ENCODE measurements at regions of chr3 and their contacts with region 1.

Region 1: GRCh38 chr3:69161587-69162307 is 39.4 kb upstream of the LMOD3 start:
- DNase-seq: peak in 1 of 5 donors; percentile 23
- ATAC-seq: peak in 3 of 4 donors; percentile 52 to 66 (median 55)
- H3K4me3 ChIP-seq: no peak overlapping the region
- H3K27ac ChIP-seq: no peak overlapping the region
- H3K4me1 ChIP-seq: peaks cover 0 to 4% (median 0%) of the 10 kb centered on the region in 12 donors
- H3K27me3 ChIP-seq: no peaks in the 10 kb centered on the region
- CTCF ChIP-seq: peak; percentile 90 to 99 (median 94)
- POLR2A ChIP-seq: no peak

Region 2: GRCh38 chr3:69120879-69121464 is 40.8 kb before region 1 on chr3:
- intact Hi-C with region 1: loop called in 1 of 10 experiments (anchors 1 kb)
- DNase-seq: peak in 4 of 5 donors; percentile 41 to 66 (median 55)
- ATAC-seq: peak in 3 of 4 donors; percentile 33 to 51 (median 50)
- H3K4me3 ChIP-seq: peak overlapping the region; percentile 21 to 63 (median 50)
- H3K27ac ChIP-seq: peak overlapping the region in 11 of 12 donors; percentile 61 to 91 (median 83)
- H3K4me1 ChIP-seq: peaks cover 0 to 19% (median 4%) of the 10 kb centered on the region in 12 donors
- H3K27me3 ChIP-seq: no peaks in the 10 kb centered on the region
- CTCF ChIP-seq: peak; percentile 87 to 96 (median 94)
- POLR2A ChIP-seq: no peak

Region 3: DNA sequence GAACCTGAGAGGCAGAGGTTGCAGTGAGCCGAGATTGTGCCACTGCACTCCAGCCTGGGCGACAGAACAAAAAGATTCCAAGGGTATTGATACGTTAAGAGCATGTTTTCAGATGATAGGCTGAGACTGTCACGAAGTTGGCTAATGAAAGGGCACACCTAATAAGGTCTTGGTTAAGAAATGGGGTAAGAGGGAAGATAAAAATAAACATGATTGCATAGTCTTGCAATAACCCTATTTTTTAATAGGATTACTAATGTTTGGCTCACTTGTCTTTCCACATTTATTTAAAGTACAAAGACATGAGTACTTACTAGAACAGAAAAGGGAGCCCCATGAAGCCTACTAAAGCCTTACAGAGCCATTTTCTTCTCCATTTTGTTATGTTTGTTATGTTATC is 115.1 kb after region 1 on chr3:
- intact Hi-C with region 1: loop called in 1 of 10 experiments (anchors 2 kb)
- DNase-seq: no peak
- ATAC-seq: no peak
- H3K4me3 ChIP-seq: no peak overlapping the region
- H3K27ac ChIP-seq: no peak overlapping the region
- H3K4me1 ChIP-seq: peaks cover 0 to 5% (median 0%) of the 10 kb centered on the region in 12 donors
- H3K27me3 ChIP-seq: no peaks in the 10 kb centered on the region
- CTCF ChIP-seq: no peak
- POLR2A ChIP-seq: no peak

Region 4: DNA sequence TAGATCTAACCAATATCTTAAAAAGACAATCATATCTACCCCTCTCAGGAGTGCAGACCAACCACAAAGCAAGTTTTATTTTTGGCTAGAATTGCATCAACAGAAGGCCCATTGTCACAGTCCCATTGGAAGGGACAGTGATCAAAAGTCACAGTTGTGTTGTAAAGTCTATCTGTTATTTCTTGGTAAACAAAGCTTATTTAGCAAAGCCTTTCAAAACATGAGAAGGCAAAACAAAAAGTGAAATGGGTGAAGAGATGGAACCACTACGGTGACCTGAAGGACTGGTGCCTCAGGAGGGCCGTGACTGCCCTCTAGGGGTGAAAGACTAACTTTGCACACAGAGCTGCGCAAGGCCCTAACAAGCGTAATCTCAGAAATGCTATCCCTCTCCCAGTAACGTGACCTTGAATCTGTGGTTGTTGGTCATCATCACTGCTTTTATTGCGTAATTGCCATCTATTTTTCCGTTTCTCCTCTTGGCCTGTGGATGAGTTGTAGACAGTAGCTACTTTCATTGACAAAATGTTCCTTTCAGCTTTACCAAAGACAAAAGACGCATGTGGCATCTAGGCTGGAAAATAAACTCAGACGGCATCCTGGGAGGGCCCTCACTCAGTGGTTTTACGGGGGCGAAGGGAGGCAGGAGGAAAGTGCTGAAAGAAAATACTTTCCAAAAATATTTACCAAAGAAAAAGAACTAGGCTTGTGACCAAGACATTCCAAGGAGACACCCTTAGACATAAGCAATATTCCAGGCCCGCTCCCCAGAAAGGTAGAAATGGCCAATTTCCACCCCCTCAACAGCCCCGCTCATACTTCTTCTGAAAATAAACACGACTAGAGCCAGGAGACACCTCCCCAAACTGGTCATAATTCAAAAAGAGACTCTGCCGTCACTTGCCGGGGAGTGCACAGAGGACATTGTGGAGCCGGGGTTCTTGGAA is 144.8 kb after region 1 on chr3:
- intact Hi-C with region 1: loop called (anchors 1 to 5 kb)
- DNase-seq: peak; percentile 66 to 82 (median 78)
- ATAC-seq: peak; percentile 80 to 98 (median 94)
- H3K4me3 ChIP-seq: no peak overlapping the region
- H3K27ac ChIP-seq: peak overlapping the region in 10 of 12 donors; percentile 26 to 83 (median 70)
- H3K4me1 ChIP-seq: peaks cover 0 to 21% (median 7%) of the 10 kb centered on the region in 12 donors
- H3K27me3 ChIP-seq: no peaks in the 10 kb centered on the region
- CTCF ChIP-seq: peak; percentile 88 to 99 (median 94)
- POLR2A ChIP-seq: no peak

Region 5: DNA sequence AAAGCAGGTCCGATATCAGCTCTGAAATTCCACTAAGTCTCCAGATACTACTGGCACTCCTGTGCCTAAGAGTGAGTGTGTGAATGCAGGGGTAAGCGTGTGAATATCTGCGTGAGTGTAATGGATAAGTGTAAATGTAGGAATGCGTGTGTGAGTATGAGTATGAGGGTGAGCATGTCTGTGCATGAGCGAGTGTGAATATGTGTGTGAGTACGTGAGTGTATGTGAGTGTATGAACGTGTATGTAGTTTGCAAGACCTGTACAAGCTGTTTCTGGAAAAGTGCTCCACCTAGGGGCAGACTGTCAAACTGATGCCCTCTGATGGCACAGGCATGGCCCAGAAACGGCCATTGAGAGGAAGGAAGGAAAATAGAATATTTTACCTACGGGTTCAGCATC is 248.5 kb after region 1 on chr3:
- intact Hi-C with region 1: loop called in 4 of 10 experiments (anchors 5 kb)
- DNase-seq: peak; percentile 67 to 77 (median 75)
- ATAC-seq: peak; percentile 83 to 90 (median 88)
- H3K4me3 ChIP-seq: peak overlapping the region in 7 of 12 donors; percentile 17 to 42 (median 24)
- H3K27ac ChIP-seq: peak overlapping the region in 8 of 12 donors; percentile 12 to 90 (median 34)
- H3K4me1 ChIP-seq: peaks cover 0 to 38% (median 19%) of the 10 kb centered on the region in 12 donors
- H3K27me3 ChIP-seq: no peaks in the 10 kb centered on the region
- CTCF ChIP-seq: peak; percentile 72 to 90 (median 84)
- POLR2A ChIP-seq: no peak

Region 6: GRCh38 chr3:69419276-69419675 is 257.5 kb after region 1 on chr3:
- intact Hi-C with region 1: loop called in 7 of 10 experiments (anchors 2 to 5 kb)
- DNase-seq: no peak
- ATAC-seq: no peak
- H3K4me3 ChIP-seq: no peak overlapping the region
- H3K27ac ChIP-seq: no peak overlapping the region
- H3K4me1 ChIP-seq: peaks cover 0 to 15% (median 10%) of the 10 kb centered on the region in 12 donors
- H3K27me3 ChIP-seq: no peaks in the 10 kb centered on the region
- CTCF ChIP-seq: no peak
- POLR2A ChIP-seq: no peak

Region 7: DNA sequence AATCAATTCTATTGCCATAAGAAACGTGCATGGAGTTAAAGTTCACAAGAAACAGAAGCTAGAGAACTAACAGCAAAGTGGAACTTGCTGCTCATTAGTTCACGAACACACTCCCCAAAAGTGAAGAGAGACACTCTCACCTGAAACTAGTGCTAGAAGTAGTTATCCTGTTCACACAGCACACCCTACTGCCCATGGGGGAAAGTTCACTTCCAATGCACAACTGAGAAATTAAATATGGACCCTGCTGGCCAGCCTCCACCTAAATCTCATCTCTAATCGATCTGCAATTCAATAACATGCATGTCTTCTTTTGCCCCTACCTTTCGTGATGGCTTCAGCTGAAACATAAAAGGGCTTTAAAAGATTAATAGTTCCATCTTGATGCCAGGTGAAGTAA is 263.5 kb after region 1 on chr3:
- intact Hi-C with region 1: loop called in 9 of 10 experiments (anchors 2 to 5 kb)
- DNase-seq: peak in 1 of 5 donors; percentile 30
- ATAC-seq: peak in 3 of 4 donors; percentile 56 to 70 (median 59)
- H3K4me3 ChIP-seq: no peak overlapping the region
- H3K27ac ChIP-seq: no peak overlapping the region
- H3K4me1 ChIP-seq: peaks cover 0 to 14% (median 10%) of the 10 kb centered on the region in 12 donors
- H3K27me3 ChIP-seq: no peaks in the 10 kb centered on the region
- CTCF ChIP-seq: peak; percentile 31 to 68 (median 52)
- POLR2A ChIP-seq: no peak

Measured in heart left ventricle (tissue), 16 donors.